ENCODE measurements at regions of chr22 and their contacts with region 1.

Region 1: GRCh38 chr22:42780070-42780540 is 59.4 kb upstream of the A4GALT start:
- DNase-seq: peak; percentile 92
- H3K4me3 ChIP-seq: no peak overlapping the region
- H3K27ac ChIP-seq: no peak overlapping the region
- H3K4me1 ChIP-seq: peaks cover 2% of the 10 kb centered on the region
- H3K27me3 ChIP-seq: no peaks in the 10 kb centered on the region
- CTCF ChIP-seq: peak; percentile 72 to 75
- POLR2A ChIP-seq: no peak

Region 2: DNA sequence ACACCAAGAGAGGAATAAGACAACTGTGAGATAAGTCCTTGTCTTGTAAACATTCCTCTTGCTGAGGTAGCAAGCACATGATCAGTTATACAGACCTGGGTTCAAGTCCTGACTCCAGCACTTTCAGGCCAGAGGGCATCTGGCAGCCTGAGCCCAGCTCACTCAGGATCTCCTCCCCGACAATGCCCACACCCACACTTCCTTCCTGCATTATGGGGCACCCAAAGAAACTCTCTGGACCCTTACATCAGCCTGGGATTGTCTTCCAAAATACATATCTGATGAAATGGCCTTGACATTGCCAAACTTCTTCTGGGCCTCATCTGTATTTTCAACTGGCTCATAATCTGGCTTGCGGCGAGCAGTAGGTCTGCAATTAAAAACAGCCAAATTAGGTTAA is 28.4 kb after region 1 on chr22:
- CTCF ChIA-PET with region 1: no interaction called
- POLR2A ChIA-PET with region 1: no interaction called
- dilution Hi-C with region 1: no loop called
- intact Hi-C with region 1: no loop called
- DNase-seq: no peak
- H3K4me3 ChIP-seq: no peak overlapping the region
- H3K27ac ChIP-seq: no peak overlapping the region
- H3K4me1 ChIP-seq: peaks cover 24% of the 10 kb centered on the region
- H3K27me3 ChIP-seq: no peaks in the 10 kb centered on the region
- CTCF ChIP-seq: no peak
- POLR2A ChIP-seq: no peak

Region 3: GRCh38 chr22:42820066-42820763 is 40.1 kb after region 1 on chr22:
- CTCF ChIA-PET with region 1: interaction called, 11 read pairs
- POLR2A ChIA-PET with region 1: no interaction called
- dilution Hi-C with region 1: no loop called
- intact Hi-C with region 1: loop called (anchors 1 kb)
- DNase-seq: peak; percentile 63
- H3K4me3 ChIP-seq: no peak overlapping the region
- H3K27ac ChIP-seq: no peak overlapping the region
- H3K4me1 ChIP-seq: peaks cover 13% of the 10 kb centered on the region
- H3K27me3 ChIP-seq: no peaks in the 10 kb centered on the region
- CTCF ChIP-seq: peak; percentile 5 to 32
- POLR2A ChIP-seq: no peak

Region 4: DNA sequence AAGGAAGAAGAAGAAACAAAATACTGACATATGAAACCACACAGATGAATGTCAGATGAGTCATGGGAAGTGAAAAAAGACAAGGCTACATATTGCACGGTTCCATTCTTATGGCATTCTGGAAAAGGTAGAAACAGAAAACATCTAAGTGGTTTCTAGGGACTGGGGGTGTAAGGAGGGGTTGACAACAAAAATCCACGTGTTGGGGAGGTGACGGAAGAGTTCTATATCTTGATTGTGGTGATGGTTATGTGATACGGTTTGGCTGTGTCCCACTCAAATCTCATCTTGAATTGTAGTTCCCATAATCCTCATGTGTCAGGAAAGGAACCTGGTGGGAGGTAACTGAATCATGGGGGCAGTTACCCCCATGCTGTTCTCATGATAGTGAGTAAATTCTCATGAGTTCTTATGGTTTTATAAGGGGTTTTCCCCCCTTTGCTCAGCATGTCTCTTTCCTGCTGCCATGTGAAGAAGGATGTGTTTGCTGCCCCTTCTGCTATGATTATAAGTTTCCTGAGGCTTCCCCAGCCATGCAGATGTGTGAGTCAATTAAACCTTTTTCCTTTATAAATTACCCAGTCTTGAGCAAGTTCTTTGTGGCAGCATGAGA is 83.3 kb after region 1 on chr22:
- CTCF ChIA-PET with region 1: interaction called, 5 read pairs
- POLR2A ChIA-PET with region 1: no interaction called
- dilution Hi-C with region 1: no loop called
- intact Hi-C with region 1: loop called (anchors 1 kb)
- DNase-seq: peak; percentile 19
- H3K4me3 ChIP-seq: no peak overlapping the region
- H3K27ac ChIP-seq: no peak overlapping the region
- H3K4me1 ChIP-seq: no peaks in the 10 kb centered on the region
- H3K27me3 ChIP-seq: no peaks in the 10 kb centered on the region
- CTCF ChIP-seq: no peak
- POLR2A ChIP-seq: no peak

Region 5: DNA sequence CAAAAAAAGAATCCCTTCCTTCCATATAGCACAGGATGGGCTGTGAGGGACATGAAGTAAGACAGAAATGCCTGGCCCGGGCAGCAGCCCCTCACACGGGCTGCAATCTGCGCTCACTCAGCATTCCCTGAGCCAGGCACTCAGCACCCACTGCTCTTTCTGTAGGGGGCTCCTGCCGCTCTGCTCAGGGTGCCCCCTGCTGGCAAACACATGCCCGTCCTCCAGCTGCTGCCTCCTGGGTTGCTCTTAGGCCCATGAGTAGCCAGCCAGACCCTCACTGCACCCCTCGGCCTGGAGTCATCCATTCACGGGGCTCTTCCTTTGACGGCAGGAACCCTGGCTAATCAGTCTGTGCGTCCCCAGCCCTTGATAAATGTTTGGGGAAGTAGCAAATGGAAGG is 356.1 kb after region 1 on chr22:
- CTCF ChIA-PET with region 1: no interaction called
- POLR2A ChIA-PET with region 1: no interaction called
- dilution Hi-C with region 1: no loop called
- intact Hi-C with region 1: loop called (anchors 1 kb)
- DNase-seq: peak; percentile 56
- H3K4me3 ChIP-seq: no peak overlapping the region
- H3K27ac ChIP-seq: no peak overlapping the region
- H3K4me1 ChIP-seq: no peaks in the 10 kb centered on the region
- H3K27me3 ChIP-seq: no peaks in the 10 kb centered on the region
- CTCF ChIP-seq: peak; percentile 76 to 95
- POLR2A ChIP-seq: no peak

Measured in endothelial cell of umbilical vein (primary cell).